ENCODE measurements at regions of chr22 and their contacts with region 1.

Region 1: GRCh38 chr22:20194681-20195593 is 44.1 kb upstream of the CCDC188 start:
- DNase-seq: no peak
- H3K4me3 ChIP-seq: no peak overlapping the region
- H3K27ac ChIP-seq: no peak overlapping the region
- H3K4me1 ChIP-seq: no peaks in the 10 kb centered on the region
- H3K27me3 ChIP-seq: no peaks in the 10 kb centered on the region
- CTCF ChIP-seq: peak; percentile 1 to 15 (median 11); a peak in 3 of 4 replicates
- EP300 ChIP-seq: no peak
- POLR2A ChIP-seq: no peak
- RAD21 ChIP-seq: no peak

Region 2: DNA sequence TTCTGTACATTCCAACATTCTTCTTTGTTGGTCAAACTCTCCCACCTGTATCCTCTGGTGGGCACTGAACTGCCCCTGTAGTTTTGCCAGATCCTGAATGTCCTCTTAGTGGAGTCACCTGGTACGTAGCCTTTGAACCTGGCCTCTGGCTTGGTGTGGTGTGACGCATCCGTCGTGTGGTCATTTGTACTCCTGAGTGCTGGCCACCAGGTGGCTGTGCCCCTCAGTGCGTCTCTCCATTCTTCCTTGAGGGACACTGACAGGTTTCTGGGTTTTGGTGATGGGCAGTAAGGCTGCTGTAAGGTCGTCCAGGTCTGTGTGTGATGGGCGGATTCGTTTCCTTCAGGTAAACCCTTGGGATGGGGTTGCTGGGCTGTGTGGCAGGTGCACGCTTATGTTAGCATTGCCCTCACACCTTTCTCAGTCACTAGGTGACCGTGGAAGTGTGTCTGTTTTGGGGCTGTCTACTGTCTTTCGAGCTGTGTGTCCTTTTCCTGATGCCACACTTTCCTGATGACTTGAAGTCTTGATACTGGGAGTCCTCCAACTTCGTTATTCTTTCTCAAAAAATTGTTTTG is 92.6 kb before region 1 on chr22:
- CTCF ChIA-PET with region 1: no interaction called
- POLR2A ChIA-PET with region 1: no interaction called
- DNase-seq: no peak
- H3K4me3 ChIP-seq: no peak overlapping the region
- H3K27ac ChIP-seq: no peak overlapping the region
- H3K4me1 ChIP-seq: peaks cover 0 to 6% (median 0%) of the 10 kb centered on the region in 4 experiments; a peak in 3 of 7 replicates
- H3K27me3 ChIP-seq: no peaks in the 10 kb centered on the region
- CTCF ChIP-seq: peak; percentile 30 to 45 (median 32)
- EP300 ChIP-seq: no peak
- POLR2A ChIP-seq: no peak
- RAD21 ChIP-seq: no peak

Region 3: DNA sequence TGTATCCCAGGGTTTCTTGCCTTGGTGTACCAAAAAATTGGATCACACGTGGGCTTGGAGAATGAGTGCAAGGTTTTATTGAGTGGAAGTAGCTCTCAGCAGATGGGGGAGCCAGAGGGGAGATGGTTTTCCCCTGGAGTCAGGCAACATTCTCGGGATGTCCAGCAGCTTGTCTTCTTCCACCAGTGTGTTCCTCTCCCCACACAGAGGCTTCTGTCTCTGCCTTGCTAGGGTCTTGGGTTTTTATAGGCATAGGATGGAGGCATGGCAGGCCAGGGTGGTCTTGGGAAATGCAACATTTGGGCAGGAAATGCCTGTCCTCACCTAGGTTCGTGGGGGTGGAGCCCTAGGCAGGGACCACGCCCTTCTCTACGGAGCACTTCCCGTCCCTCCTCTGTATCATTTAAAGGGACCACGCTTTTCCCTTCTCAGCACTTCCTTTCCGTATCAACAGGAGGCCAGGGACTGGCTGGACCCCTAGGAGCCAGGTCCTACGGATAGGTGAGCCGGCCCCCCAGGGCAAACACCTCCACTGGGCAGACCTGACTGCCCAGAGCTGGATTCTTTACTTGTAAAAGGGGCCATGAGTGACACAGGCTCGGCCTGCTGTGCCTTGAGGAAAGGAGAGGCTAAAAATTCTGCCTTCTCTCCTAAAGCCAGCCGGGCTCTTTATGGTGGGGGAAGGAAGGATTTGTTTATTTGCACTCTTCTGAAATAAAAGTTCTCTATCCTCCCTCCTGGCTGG is 11.2 kb after region 1 on chr22:
- CTCF ChIA-PET with region 1: interaction called, 34 read pairs
- POLR2A ChIA-PET with region 1: interaction called, 3 read pairs
- DNase-seq: no peak
- H3K4me3 ChIP-seq: no peak overlapping the region
- H3K27ac ChIP-seq: no peak overlapping the region
- H3K4me1 ChIP-seq: peaks cover 0 to 23% (median 16%) of the 10 kb centered on the region in 4 experiments; a peak in 6 of 7 replicates
- H3K27me3 ChIP-seq: no peaks in the 10 kb centered on the region
- CTCF ChIP-seq: no peak
- EP300 ChIP-seq: no peak
- POLR2A ChIP-seq: no peak
- RAD21 ChIP-seq: no peak

Region 4: GRCh38 chr22:20211997-20212753 is 17.2 kb after region 1 on chr22:
- CTCF ChIA-PET with region 1: interaction called, 12 read pairs
- POLR2A ChIA-PET with region 1: no interaction called
- DNase-seq: no peak
- H3K4me3 ChIP-seq: no peak overlapping the region
- H3K27ac ChIP-seq: no peak overlapping the region
- H3K4me1 ChIP-seq: no peaks in the 10 kb centered on the region; a peak in 1 of 7 replicates
- H3K27me3 ChIP-seq: no peaks in the 10 kb centered on the region
- CTCF ChIP-seq: no peak
- EP300 ChIP-seq: no peak
- POLR2A ChIP-seq: no peak
- RAD21 ChIP-seq: no peak